ENCODE measurements at regions of chr18 and their contacts with region 1.

Region 1: GRCh38 chr18:3447895-3448837 is 1.8 kb upstream of the TGIF1 start:
- DNase-seq: peak; percentile 19
- ATAC-seq: peak; percentile 76
- H3K4me3 ChIP-seq: peak overlapping the region; percentile 82
- H3K27ac ChIP-seq: peak overlapping the region; percentile 73
- H3K4me1 ChIP-seq: peaks cover 19% of the 10 kb centered on the region
- H3K27me3 ChIP-seq: peaks cover 2 to 21% of the 10 kb centered on the region in 2 experiments
- CTCF ChIP-seq: 0 out of 6 replicates have a peak, but pooled peaks of 1 of the 3 experiments have one; percentile 14
- EP300 ChIP-seq: no peak
- POLR2A ChIP-seq: peak; percentile 71; the same call in 1 of the 2 replicates
- RAD21 ChIP-seq: peak; percentile 34; the same call in 1 of the 2 replicates

Region 2: GRCh38 chr18:2971741-2972552 is 476.2 kb before region 1 on chr18:
- CTCF ChIA-PET with region 1: no interaction called
- POLR2A ChIA-PET with region 1: no interaction called
- RAD21 ChIA-PET with region 1: no interaction called
- SMC1A ChIA-PET with region 1: no interaction called
- in situ Hi-C with region 1: loop called (anchors 10 kb)
- intact Hi-C with region 1: no loop called
- DNase-seq: peak; percentile 90
- ATAC-seq: peak; percentile 89
- H3K4me3 ChIP-seq: peak overlapping the region; percentile 60
- H3K27ac ChIP-seq: peak overlapping the region; percentile 94
- H3K4me1 ChIP-seq: peaks cover 51% of the 10 kb centered on the region
- H3K27me3 ChIP-seq: no peaks in the 10 kb centered on the region
- CTCF ChIP-seq: no peak
- EP300 ChIP-seq: peak; percentile 32 to 48; a peak in 1 of 4 replicates
- POLR2A ChIP-seq: peak; percentile 78
- RAD21 ChIP-seq: no peak

Region 3: DNA sequence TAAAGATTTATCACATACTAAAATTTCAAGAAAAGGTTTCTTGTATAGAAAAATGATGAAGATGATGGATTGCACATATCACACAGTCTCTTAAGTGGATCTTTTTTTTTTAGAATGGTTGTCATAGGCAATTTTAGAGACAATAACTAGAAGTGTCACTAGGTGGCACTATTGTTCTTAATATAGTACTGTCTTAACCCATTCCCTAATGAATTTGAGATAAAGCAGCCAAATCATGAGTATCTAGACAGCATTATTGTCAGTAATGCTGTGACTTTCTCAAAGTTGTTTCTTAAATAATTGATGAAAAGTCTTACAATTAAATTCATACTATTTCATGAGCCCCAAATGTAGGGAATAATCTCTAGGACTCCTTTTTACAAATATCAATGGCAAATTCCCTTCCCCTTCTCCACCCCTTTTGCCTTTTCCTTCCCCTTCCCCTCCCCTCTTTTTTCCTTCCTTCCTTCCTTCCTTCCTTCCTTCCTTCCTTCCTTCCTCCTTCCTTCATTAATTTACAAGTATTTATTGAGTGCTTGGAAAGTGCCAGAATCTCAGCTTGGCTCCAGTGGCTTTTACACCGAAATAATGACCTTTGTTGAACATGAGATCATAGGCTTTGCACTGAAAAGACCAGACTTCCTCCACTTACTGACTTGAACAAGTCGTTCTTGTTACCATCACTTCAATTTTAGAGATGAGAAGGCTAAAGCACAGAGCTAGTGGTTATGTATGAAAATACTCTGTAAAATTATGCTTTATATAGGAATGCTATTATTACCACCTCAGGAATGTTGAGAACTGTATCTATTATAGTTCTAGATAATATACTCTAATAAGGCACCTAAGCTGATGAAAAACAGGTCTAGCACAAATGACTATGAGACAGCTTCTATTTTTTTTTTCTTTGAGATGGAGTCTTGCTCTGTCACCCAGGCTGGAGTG is 166.4 kb before region 1 on chr18:
- CTCF ChIA-PET with region 1: interaction called, 36 read pairs
- POLR2A ChIA-PET with region 1: no interaction called
- RAD21 ChIA-PET with region 1: interaction called, 49 read pairs
- SMC1A ChIA-PET with region 1: interaction called, 6 read pairs
- in situ Hi-C with region 1: loop called (anchors 5 kb)
- intact Hi-C with region 1: no loop called
- DNase-seq: no peak
- ATAC-seq: peak; percentile 69
- H3K4me3 ChIP-seq: no peak overlapping the region
- H3K27ac ChIP-seq: no peak overlapping the region
- H3K4me1 ChIP-seq: peaks cover 24% of the 10 kb centered on the region
- H3K27me3 ChIP-seq: no peaks in the 10 kb centered on the region
- CTCF ChIP-seq: peak; percentile 35 to 66 (median 46); a peak in 4 of 6 replicates
- EP300 ChIP-seq: no peak
- POLR2A ChIP-seq: no peak
- RAD21 ChIP-seq: peak; percentile 75

Region 4: GRCh38 chr18:3321133-3321812 is 126.9 kb before region 1 on chr18:
- CTCF ChIA-PET with region 1: interaction called, 4 read pairs
- POLR2A ChIA-PET with region 1: no interaction called
- RAD21 ChIA-PET with region 1: no interaction called
- SMC1A ChIA-PET with region 1: interaction called, 5 read pairs
- in situ Hi-C with region 1: no loop called
- intact Hi-C with region 1: loop called (anchors 5 kb)
- DNase-seq: no peak
- ATAC-seq: no peak
- H3K4me3 ChIP-seq: no peak overlapping the region
- H3K27ac ChIP-seq: no peak overlapping the region
- H3K4me1 ChIP-seq: peaks cover 9% of the 10 kb centered on the region
- H3K27me3 ChIP-seq: no peaks in the 10 kb centered on the region
- CTCF ChIP-seq: no peak
- EP300 ChIP-seq: no peak
- POLR2A ChIP-seq: no peak
- RAD21 ChIP-seq: no peak

Region 5: GRCh38 chr18:3380384-3380961 is 67.7 kb before region 1 on chr18:
- CTCF ChIA-PET with region 1: interaction called, 12 read pairs
- POLR2A ChIA-PET with region 1: no interaction called
- RAD21 ChIA-PET with region 1: no interaction called
- SMC1A ChIA-PET with region 1: interaction called, 12 read pairs
- in situ Hi-C with region 1: no loop called
- intact Hi-C with region 1: loop called (anchors 5 kb)
- DNase-seq: no peak
- ATAC-seq: peak; percentile 37
- H3K4me3 ChIP-seq: no peak overlapping the region
- H3K27ac ChIP-seq: no peak overlapping the region
- H3K4me1 ChIP-seq: peaks cover 15% of the 10 kb centered on the region
- H3K27me3 ChIP-seq: peaks cover 0 to 2% of the 10 kb centered on the region in 2 experiments; a peak in 1 of 4 replicates
- CTCF ChIP-seq: peak in 1 of 3 experiments; percentile 8; a peak in 1 of 6 replicates
- EP300 ChIP-seq: no peak
- POLR2A ChIP-seq: no peak
- RAD21 ChIP-seq: peak; percentile 38; the same call in 1 of the 2 replicates

Region 6: GRCh38 chr18:3402982-3403451 is 45.1 kb before region 1 on chr18:
- CTCF ChIA-PET with region 1: no interaction called
- POLR2A ChIA-PET with region 1: no interaction called
- RAD21 ChIA-PET with region 1: interaction called, 4 read pairs
- SMC1A ChIA-PET with region 1: interaction called, 3 read pairs
- in situ Hi-C with region 1: no loop called
- intact Hi-C with region 1: loop called (anchors 5 kb)
- DNase-seq: no peak
- ATAC-seq: peak; percentile 42
- H3K4me3 ChIP-seq: no peak overlapping the region
- H3K27ac ChIP-seq: no peak overlapping the region
- H3K4me1 ChIP-seq: peaks cover 36% of the 10 kb centered on the region
- H3K27me3 ChIP-seq: no peaks in the 10 kb centered on the region
- CTCF ChIP-seq: no peak
- EP300 ChIP-seq: no peak
- POLR2A ChIP-seq: no peak
- RAD21 ChIP-seq: no peak